Breast epithelium (tissue), 4 donors: ENCODE measurements at regions of chr5 and their contacts with region 1.

Region 1: GRCh38 chr5:14727428-14727865 is 62.9 kb downstream of the OTULIN start:
- DNase-seq: peak; percentile 53 to 81
- H3K4me3 ChIP-seq: no peak overlapping the region
- H3K27ac ChIP-seq: no peak overlapping the region
- H3K4me1 ChIP-seq: no peaks in the 10 kb centered on the region
- H3K27me3 ChIP-seq: no peaks in the 10 kb centered on the region
- CTCF ChIP-seq: peak; percentile 95 to 97 (median 95)
- POLR2A ChIP-seq: no peak

Region 2: DNA sequence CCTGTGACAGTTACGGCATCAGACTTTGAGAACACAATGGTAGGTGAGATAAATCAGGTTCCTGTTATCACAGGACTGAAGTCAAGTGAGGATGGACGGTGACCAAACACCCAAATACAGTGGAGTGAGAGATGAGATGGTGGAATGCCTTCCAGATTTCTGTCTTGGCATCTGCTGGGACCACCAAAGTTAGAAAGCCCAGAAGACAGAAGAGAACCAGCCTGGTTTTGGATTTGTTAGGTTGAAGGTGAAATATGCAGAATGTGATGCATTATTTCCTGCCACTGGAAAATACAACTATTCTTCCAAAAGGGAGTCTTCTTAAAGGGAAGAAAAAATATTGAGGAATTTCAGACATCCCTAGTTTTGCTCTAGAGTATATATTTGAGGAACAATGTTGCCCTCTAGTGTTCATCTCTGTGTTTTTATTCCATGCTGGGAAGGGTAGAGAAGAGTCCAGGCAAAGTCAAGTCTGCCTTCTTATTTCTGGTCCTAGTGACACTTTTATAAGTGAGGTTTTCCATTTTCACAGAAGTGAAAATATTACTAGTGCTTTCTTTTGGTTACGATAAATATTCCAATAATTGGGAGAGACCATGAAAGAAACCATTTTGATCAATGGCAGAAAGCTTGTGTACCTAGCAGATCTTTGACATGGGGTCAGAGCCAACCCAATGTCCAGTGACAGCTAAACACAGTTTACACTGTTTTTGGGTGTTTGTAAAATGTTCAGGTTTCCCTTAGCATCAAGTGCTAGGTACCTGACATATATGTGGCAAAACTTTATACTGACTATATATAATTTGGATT is 286.4 kb after region 1 on chr5:
- intact Hi-C with region 1: loop called (anchors 5 kb)
- DNase-seq: no peak
- H3K4me3 ChIP-seq: no peak overlapping the region
- H3K27ac ChIP-seq: no peak overlapping the region
- H3K4me1 ChIP-seq: peaks cover 5 to 11% of the 10 kb centered on the region in 2 donors
- H3K27me3 ChIP-seq: no peaks in the 10 kb centered on the region
- CTCF ChIP-seq: peak; percentile 72 to 78 (median 77)
- POLR2A ChIP-seq: no peak

Region 3: GRCh38 chr5:16253856-16254255 is 1526.4 kb after region 1 on chr5:
- intact Hi-C with region 1: no loop called
- DNase-seq: no peak
- H3K4me3 ChIP-seq: no peak overlapping the region
- H3K27ac ChIP-seq: no peak overlapping the region
- H3K4me1 ChIP-seq: no peaks in the 10 kb centered on the region
- H3K27me3 ChIP-seq: no peaks in the 10 kb centered on the region
- CTCF ChIP-seq: no peak
- POLR2A ChIP-seq: no peak